ENCODE measurements at regions of chr18 and their contacts with region 1.

Region 1: DNA sequence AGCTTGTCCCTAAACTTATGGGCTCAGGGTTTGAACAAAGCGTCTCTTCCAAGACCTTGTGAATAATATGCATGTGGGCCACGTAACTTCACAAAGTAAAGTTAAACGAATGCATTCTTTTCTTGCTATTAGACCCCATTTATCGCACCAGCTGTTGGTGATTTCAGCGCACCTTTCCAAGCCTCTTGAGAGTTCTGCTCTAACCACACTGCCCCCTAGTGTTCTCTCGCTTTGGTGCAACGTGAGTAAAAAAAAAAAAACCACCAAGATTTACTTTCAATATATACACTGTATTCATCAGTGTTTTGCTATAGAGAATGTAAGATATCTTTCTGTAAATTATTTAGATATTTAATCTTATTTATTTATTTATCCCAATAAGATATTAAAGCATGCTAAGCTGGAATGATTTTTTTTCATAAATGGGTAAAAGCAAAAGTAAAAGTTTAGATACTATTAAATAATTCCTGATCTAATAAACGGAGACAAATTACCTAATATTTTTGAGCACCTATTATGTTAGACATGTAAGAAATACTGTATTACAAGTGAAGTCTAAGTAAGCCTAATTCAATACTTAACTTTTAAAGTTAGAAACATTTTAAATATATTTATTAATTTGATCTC is 459.5 kb downstream of the DLGAP1 start:
- DNase-seq: peak; percentile 38
- ATAC-seq: peak; percentile 85
- H3K4me3 ChIP-seq: no peak overlapping the region
- H3K27ac ChIP-seq: no peak overlapping the region
- H3K4me1 ChIP-seq: no peaks in the 10 kb centered on the region
- H3K27me3 ChIP-seq: no peaks in the 10 kb centered on the region
- CTCF ChIP-seq: peak; percentile 75 to 76 (median 75); a peak in 5 of 6 replicates
- EP300 ChIP-seq: no peak
- POLR2A ChIP-seq: no peak
- RAD21 ChIP-seq: peak; percentile 61

Region 2: DNA sequence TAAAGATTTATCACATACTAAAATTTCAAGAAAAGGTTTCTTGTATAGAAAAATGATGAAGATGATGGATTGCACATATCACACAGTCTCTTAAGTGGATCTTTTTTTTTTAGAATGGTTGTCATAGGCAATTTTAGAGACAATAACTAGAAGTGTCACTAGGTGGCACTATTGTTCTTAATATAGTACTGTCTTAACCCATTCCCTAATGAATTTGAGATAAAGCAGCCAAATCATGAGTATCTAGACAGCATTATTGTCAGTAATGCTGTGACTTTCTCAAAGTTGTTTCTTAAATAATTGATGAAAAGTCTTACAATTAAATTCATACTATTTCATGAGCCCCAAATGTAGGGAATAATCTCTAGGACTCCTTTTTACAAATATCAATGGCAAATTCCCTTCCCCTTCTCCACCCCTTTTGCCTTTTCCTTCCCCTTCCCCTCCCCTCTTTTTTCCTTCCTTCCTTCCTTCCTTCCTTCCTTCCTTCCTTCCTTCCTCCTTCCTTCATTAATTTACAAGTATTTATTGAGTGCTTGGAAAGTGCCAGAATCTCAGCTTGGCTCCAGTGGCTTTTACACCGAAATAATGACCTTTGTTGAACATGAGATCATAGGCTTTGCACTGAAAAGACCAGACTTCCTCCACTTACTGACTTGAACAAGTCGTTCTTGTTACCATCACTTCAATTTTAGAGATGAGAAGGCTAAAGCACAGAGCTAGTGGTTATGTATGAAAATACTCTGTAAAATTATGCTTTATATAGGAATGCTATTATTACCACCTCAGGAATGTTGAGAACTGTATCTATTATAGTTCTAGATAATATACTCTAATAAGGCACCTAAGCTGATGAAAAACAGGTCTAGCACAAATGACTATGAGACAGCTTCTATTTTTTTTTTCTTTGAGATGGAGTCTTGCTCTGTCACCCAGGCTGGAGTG is 713.9 kb before region 1 on chr18:
- CTCF ChIA-PET with region 1: interaction called, 5 read pairs
- POLR2A ChIA-PET with region 1: no interaction called
- RAD21 ChIA-PET with region 1: no interaction called
- SMC1A ChIA-PET with region 1: interaction called, 5 read pairs
- in situ Hi-C with region 1: no loop called
- intact Hi-C with region 1: loop called (anchors 10 kb)
- DNase-seq: no peak
- ATAC-seq: peak; percentile 69
- H3K4me3 ChIP-seq: no peak overlapping the region
- H3K27ac ChIP-seq: no peak overlapping the region
- H3K4me1 ChIP-seq: peaks cover 24% of the 10 kb centered on the region
- H3K27me3 ChIP-seq: no peaks in the 10 kb centered on the region
- CTCF ChIP-seq: peak; percentile 35 to 66 (median 46); a peak in 4 of 6 replicates
- EP300 ChIP-seq: no peak
- POLR2A ChIP-seq: no peak
- RAD21 ChIP-seq: peak; percentile 75

Region 3: DNA sequence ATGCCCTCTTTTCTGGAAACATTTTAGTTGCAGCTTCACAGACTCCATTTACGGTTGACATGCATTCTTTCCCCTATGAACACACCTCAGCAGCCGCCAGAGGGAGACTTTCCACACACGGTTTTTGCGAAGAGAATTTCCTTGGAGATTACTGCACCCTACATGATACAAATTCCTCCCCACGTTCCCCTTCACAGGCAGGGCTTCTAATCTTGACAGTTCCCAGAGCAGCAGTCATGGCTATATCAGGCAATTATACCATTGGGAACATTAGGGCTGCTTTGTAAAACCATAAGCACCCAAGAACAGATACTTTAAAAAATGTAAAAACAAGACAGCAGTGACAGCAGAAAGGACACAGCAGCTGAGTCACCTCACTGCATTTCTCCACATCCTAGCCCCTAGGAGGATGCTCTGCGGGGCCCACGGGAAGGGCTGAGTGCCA is 291.8 kb before region 1 on chr18:
- CTCF ChIA-PET with region 1: interaction called, 13 read pairs
- POLR2A ChIA-PET with region 1: no interaction called
- RAD21 ChIA-PET with region 1: interaction called, 5 read pairs
- SMC1A ChIA-PET with region 1: interaction called, 17 read pairs
- in situ Hi-C with region 1: no loop called
- intact Hi-C with region 1: loop called (anchors 5 kb)
- DNase-seq: no peak
- ATAC-seq: peak; percentile 79
- H3K4me3 ChIP-seq: no peak overlapping the region
- H3K27ac ChIP-seq: no peak overlapping the region
- H3K4me1 ChIP-seq: no peaks in the 10 kb centered on the region
- H3K27me3 ChIP-seq: no peaks in the 10 kb centered on the region
- CTCF ChIP-seq: peak; percentile 60 to 74 (median 61)
- EP300 ChIP-seq: no peak
- POLR2A ChIP-seq: no peak
- RAD21 ChIP-seq: peak; percentile 55

Region 4: DNA sequence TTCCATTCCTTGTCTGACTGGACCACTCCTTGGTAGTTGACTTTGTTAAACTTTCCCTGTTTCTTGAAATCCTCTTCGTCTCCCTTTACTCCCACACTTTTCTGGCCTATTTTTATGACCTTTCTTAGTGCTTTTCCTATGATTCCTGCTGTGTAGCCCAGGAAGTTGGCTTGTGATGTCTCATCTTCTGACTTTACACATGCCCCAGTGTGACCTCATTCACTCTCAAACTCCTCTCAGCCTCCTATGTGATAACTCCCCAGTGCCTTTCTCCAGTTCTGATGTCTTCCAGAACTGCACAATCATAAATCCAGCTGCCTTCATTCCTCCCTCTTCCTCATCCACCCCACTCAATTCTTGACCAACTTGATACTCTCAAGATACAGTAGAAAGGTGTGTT is 138.0 kb before region 1 on chr18:
- CTCF ChIA-PET with region 1: interaction called, 13 read pairs
- POLR2A ChIA-PET with region 1: no interaction called
- RAD21 ChIA-PET with region 1: interaction called, 9 read pairs
- SMC1A ChIA-PET with region 1: interaction called, 5 read pairs
- in situ Hi-C with region 1: no loop called
- intact Hi-C with region 1: no loop called
- DNase-seq: no peak
- ATAC-seq: no peak
- H3K4me3 ChIP-seq: no peak overlapping the region
- H3K27ac ChIP-seq: no peak overlapping the region
- H3K4me1 ChIP-seq: no peaks in the 10 kb centered on the region
- H3K27me3 ChIP-seq: no peaks in the 10 kb centered on the region
- CTCF ChIP-seq: no peak
- EP300 ChIP-seq: no peak
- POLR2A ChIP-seq: no peak
- RAD21 ChIP-seq: no peak

Region 5: DNA sequence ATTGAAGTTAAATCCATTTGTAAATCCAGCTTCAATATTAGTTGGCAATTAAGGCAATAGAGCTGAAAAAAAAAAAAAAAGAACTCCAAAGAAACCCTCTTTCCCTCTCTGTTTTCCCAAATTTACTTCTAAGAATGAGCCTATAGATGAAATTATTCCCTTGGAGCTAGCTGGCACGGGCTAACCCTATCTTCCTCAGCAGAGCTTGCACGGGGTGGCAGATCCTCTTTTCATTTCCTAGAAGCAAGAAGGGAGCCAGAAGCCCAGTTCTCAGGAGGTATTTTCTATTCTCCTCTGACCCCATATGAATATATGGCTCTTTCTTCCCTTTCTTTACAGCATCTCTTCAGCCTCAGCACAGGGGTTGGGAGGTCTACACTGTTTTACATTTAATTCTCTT is 119.6 kb before region 1 on chr18:
- CTCF ChIA-PET with region 1: interaction called, 14 read pairs
- POLR2A ChIA-PET with region 1: no interaction called
- RAD21 ChIA-PET with region 1: interaction called, 6 read pairs
- SMC1A ChIA-PET with region 1: interaction called, 16 read pairs
- in situ Hi-C with region 1: no loop called
- intact Hi-C with region 1: no loop called
- DNase-seq: no peak
- ATAC-seq: peak; percentile 34
- H3K4me3 ChIP-seq: no peak overlapping the region
- H3K27ac ChIP-seq: no peak overlapping the region
- H3K4me1 ChIP-seq: no peaks in the 10 kb centered on the region
- H3K27me3 ChIP-seq: no peaks in the 10 kb centered on the region
- CTCF ChIP-seq: no peak
- EP300 ChIP-seq: no peak
- POLR2A ChIP-seq: no peak
- RAD21 ChIP-seq: no peak

Region 6: DNA sequence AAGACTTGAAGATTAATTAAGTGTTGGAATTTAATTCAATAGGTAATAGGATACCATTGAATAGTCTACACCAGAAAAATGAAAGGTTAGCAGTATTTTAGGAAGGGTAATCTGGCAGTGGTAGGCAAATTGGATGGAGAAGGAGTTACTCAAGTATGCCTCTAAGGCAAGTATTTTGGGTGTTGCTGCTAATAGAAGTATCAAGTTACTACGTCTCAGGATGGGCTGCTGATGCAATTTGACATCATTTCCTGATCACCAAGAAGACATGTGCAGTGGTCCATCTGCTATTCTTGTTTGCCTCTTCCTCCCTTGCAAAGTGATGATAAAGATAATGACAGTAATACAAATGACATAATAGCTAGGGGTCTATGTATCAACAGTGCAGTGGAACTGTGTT is 60.3 kb before region 1 on chr18:
- CTCF ChIA-PET with region 1: interaction called, 4 read pairs
- POLR2A ChIA-PET with region 1: no interaction called
- RAD21 ChIA-PET with region 1: no interaction called
- SMC1A ChIA-PET with region 1: interaction called, 10 read pairs
- in situ Hi-C with region 1: no loop called
- intact Hi-C with region 1: no loop called
- DNase-seq: no peak
- ATAC-seq: no peak
- H3K4me3 ChIP-seq: no peak overlapping the region
- H3K27ac ChIP-seq: no peak overlapping the region
- H3K4me1 ChIP-seq: no peaks in the 10 kb centered on the region
- H3K27me3 ChIP-seq: no peaks in the 10 kb centered on the region
- CTCF ChIP-seq: no peak
- EP300 ChIP-seq: no peak
- POLR2A ChIP-seq: no peak
- RAD21 ChIP-seq: no peak

Region 7: DNA sequence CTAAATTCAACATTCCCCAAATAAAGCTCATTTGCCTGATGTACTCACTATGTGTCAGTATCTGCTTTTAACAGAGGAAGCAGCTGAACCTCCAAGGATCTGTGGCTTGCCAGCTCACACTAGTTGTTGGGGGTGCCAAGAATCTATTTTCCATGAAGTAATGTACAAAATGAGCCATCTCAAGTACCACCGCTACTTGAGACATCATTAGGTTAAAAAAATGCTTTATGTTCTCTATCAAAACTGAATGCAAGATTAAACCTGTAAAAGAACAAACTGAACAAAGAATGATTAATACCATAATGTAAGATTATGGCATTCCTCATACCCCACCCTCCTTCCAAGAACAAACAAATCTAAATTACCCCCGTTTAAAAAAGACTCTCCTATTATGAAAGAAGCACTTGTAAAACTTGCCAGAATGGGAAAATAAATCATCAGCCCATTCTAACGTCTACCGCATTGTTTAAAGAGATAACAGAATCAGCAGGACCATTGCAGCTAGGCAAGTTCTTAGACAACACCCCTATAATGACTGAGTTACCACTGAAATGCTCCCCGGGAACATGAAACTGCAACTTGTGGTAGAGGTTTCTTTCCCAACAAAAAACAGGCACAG is 12.1 kb before region 1 on chr18:
- CTCF ChIA-PET with region 1: interaction called, 54 read pairs
- POLR2A ChIA-PET with region 1: interaction called, 7 read pairs
- RAD21 ChIA-PET with region 1: interaction called, 17 read pairs
- SMC1A ChIA-PET with region 1: interaction called, 36 read pairs
- in situ Hi-C with region 1: no loop called
- intact Hi-C with region 1: no loop called
- DNase-seq: no peak
- ATAC-seq: peak; percentile 11; the same call in 1 of the 3 replicates
- H3K4me3 ChIP-seq: no peak overlapping the region
- H3K27ac ChIP-seq: no peak overlapping the region
- H3K4me1 ChIP-seq: no peaks in the 10 kb centered on the region
- H3K27me3 ChIP-seq: no peaks in the 10 kb centered on the region
- CTCF ChIP-seq: no peak
- EP300 ChIP-seq: no peak
- POLR2A ChIP-seq: no peak
- RAD21 ChIP-seq: no peak

Region 8: DNA sequence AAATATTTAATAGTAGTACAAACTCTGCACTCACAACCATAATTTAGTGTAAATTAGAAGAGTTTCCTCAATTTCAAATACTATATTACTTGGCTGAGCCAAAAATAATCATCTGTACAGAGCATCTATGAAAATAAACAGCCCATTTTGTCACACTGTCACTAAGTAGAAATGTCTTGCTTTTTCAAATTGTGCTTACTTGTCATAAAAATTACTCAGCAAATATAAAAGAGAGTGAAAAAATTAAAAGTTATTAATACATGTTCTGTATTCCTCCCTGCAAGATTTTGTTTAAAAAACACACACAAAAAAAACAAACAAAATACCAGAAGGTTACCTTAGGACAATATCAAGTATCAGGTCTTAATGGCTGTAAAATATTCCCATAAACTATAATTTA is 303.8 kb after region 1 on chr18:
- CTCF ChIA-PET with region 1: no interaction called
- POLR2A ChIA-PET with region 1: no interaction called
- RAD21 ChIA-PET with region 1: no interaction called
- SMC1A ChIA-PET with region 1: no interaction called
- in situ Hi-C with region 1: no loop called
- intact Hi-C with region 1: no loop called
- DNase-seq: no peak
- ATAC-seq: no peak
- H3K4me3 ChIP-seq: no peak overlapping the region
- H3K27ac ChIP-seq: no peak overlapping the region
- H3K4me1 ChIP-seq: no peaks in the 10 kb centered on the region
- H3K27me3 ChIP-seq: no peaks in the 10 kb centered on the region
- CTCF ChIP-seq: no peak
- EP300 ChIP-seq: no peak
- POLR2A ChIP-seq: no peak
- RAD21 ChIP-seq: no peak

Region 9: DNA sequence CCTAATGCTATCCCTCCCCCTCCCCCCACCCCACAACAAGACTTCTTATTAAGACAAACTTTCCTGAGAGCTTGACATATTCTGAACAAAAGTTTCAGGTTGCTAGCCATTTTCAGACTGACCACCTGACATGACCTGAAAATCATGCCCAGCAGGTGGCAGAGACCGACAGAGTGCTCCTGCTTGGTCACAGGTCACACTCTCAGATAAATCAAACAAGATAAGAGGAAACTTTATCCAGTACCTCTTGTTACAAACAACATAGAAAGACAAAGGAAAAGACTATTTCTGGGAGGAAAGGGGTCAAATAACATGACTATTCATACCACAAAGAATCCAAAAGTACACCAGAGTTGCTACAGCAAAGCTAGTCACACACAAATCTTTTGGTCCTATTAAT is 1792.3 kb after region 1 on chr18:
- CTCF ChIA-PET with region 1: no interaction called
- POLR2A ChIA-PET with region 1: no interaction called
- RAD21 ChIA-PET with region 1: no interaction called
- SMC1A ChIA-PET with region 1: no interaction called
- in situ Hi-C with region 1: no loop called
- intact Hi-C with region 1: no loop called
- DNase-seq: no peak
- ATAC-seq: no peak
- H3K4me3 ChIP-seq: no peak overlapping the region
- H3K27ac ChIP-seq: no peak overlapping the region
- H3K4me1 ChIP-seq: no peaks in the 10 kb centered on the region
- H3K27me3 ChIP-seq: peaks cover 0 to 1% of the 10 kb centered on the region in 2 experiments; a peak in 1 of 4 replicates
- CTCF ChIP-seq: no peak
- EP300 ChIP-seq: no peak
- POLR2A ChIP-seq: no peak
- RAD21 ChIP-seq: no peak